ENCODE measurements at regions of chr2 and their contacts with region 1.

Region 1: DNA sequence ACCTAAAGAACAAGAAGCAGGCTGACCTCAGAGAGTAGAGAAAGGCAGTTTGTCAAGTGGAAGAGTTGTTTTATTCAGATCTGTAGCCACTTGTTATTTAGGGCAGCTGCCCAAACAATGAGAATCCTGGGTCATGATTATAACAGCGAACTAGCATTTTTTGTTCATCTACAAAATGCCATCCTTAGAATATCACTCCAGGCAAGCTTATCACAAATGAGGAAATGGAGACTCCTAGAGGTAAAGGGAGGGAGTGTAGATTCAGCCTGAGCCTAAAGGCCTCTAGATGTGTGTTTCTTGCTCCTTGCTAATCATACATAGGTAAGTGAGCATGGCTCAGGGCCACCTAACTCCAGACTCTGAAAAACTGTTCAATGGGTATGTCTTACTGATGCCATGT is 126.1 kb downstream of the HNMT start:
- DNase-seq: peak; percentile 41 to 66 (median 59)
- H3K4me3 ChIP-seq: no peak overlapping the region
- H3K27ac ChIP-seq: no peak overlapping the region
- H3K4me1 ChIP-seq: no peaks in the 10 kb centered on the region
- H3K27me3 ChIP-seq: no peaks in the 10 kb centered on the region

Region 2: GRCh38 chr2:137910641-137911040 is 179.7 kb before region 1 on chr2:
- CTCF ChIA-PET with region 1: interaction called, 19 read pairs
- POLR2A ChIA-PET with region 1: no interaction called
- DNase-seq: peak; percentile 20 to 44 (median 41)
- H3K4me3 ChIP-seq: no peak overlapping the region
- H3K27ac ChIP-seq: no peak overlapping the region
- H3K4me1 ChIP-seq: no peaks in the 10 kb centered on the region
- H3K27me3 ChIP-seq: no peaks in the 10 kb centered on the region

Region 3: DNA sequence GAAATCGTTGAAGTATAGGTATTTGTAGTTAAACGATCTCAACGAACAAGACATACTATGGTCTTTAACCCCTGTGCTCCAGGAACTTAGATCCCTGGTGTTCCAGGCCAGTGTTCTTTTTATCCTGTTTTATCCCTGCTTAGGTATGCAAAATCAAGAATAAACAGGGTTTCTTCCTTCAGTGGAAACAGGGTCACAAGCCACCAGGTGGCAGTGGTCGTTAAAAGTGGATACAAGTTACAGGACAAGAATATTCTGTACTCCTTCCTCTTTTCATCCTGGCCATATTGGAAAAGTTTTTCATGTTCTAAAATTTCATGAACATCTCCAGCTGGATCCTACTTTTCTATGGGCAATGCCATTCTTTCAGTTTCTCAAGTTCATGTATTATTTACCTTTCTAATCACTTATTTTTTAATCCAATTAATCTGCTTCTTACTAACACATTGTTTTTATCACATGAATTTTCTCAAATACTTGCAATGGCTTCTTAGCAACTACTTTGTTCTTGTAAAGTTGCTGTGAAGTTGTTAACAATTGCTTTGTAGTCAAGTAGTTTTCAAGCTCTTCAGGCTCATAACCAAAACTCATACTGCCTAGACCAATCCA is 142.5 kb before region 1 on chr2:
- CTCF ChIA-PET with region 1: interaction called, 37 read pairs
- POLR2A ChIA-PET with region 1: no interaction called
- DNase-seq: peak; percentile 71 to 82 (median 77)
- H3K4me3 ChIP-seq: no peak overlapping the region
- H3K27ac ChIP-seq: no peak overlapping the region
- H3K4me1 ChIP-seq: no peaks in the 10 kb centered on the region
- H3K27me3 ChIP-seq: no peaks in the 10 kb centered on the region

Region 4: DNA sequence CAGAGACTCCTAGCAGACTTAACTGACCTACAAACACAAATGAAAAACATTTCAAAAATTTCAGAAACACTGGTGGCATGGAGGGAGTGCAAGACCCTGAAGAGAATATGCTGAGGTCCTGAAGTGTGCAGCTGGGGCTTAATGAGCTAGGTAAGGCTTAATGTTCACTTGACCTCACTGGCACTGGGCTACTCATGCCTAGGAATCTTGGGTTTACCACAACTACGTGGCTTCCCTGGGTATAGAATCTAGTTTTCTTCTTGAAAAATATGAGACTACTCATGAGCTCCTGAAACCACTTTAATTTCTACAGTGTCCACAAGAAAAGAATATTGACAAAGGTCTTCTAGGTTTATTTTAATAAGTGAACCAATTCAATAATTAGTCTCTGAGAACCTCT is 13.7 kb after region 1 on chr2:
- CTCF ChIA-PET with region 1: interaction called, 12 read pairs
- POLR2A ChIA-PET with region 1: no interaction called
- DNase-seq: no peak
- H3K4me3 ChIP-seq: no peak overlapping the region
- H3K27ac ChIP-seq: no peak overlapping the region
- H3K4me1 ChIP-seq: no peaks in the 10 kb centered on the region
- H3K27me3 ChIP-seq: no peaks in the 10 kb centered on the region

Region 5: DNA sequence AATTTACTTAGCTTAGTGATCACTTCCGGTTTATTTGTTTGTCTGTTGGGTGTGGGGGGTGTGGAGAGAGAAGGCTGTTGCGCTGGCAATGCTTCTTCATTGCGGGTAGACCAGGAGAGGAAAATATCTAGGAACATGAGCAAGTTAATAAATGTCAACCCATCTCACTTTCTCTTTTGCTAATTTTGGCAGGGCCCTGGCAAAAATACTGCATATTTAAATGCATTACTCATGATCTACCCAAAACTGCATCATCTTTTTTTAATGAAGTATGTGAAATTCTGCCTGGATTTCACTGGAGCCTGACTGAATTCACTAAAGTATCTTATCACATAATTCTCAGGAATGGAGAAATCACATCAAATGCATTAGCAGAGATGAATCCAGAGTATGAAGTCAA is 1820.8 kb after region 1 on chr2:
- CTCF ChIA-PET with region 1: no interaction called
- POLR2A ChIA-PET with region 1: no interaction called
- DNase-seq: no peak
- H3K4me3 ChIP-seq: no peak overlapping the region
- H3K27ac ChIP-seq: no peak overlapping the region
- H3K4me1 ChIP-seq: no peaks in the 10 kb centered on the region
- H3K27me3 ChIP-seq: no peaks in the 10 kb centered on the region

Measured in common myeloid progenitor, CD34-positive (primary cell).